Activated CD8-positive, alpha-beta T cell treated with anti-CD3 and anti-CD28 coated beads, Interleukin-2, amount 10 ng/mL, durations not matched to agents 7 days and 5 days (primary cell): ENCODE measurements at regions of chr14 and their contacts with region 1.

Region 1: DNA sequence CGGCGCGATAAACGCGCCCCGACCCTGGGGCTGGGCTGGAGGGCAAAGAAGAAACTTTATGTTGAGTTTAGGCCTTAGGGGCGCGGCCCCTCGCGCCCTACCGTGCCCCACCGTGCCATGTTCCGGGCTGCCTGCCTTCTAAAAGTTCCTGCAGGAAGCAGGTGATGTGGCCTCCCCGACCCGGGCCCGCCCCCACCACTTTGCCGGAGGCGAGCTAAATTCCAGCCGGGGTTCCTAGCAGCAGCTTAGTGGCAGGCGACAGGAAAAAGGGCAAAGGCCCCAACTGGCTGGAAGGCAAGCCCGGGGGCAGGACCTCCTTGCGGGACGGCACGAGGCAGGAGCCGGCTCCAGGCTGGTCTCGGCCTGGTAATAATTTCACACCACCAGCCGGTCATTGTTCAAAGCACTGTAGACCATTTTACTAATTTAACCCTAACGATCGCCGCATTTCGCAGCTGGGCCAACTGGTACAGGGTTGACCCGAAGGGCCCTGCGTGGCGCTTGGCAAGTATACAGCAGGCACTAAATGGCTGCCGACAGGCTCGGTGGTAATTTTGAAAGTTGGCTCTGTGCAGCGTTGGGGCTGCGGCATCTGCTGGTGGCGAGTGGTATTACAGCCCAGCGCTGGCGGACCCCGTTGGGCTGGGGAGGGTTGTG is 895 bp upstream of the CCDC88C start:
- DNase-seq: peak; percentile 86
- ATAC-seq: peak; percentile 17
- H3K4me3 Mint-ChIP-seq: peak overlapping the region; percentile 73
- H3K27ac Mint-ChIP-seq: peak overlapping the region; percentile 89
- H3K4me1 Mint-ChIP-seq: peaks cover 30% of the 10 kb centered on the region
- H3K27me3 Mint-ChIP-seq: peaks cover 6% of the 10 kb centered on the region

Region 2: GRCh38 chr14:91228112-91229004 is 190.2 kb before region 1 on chr14:
- CTCF ChIA-PET with region 1: no interaction called
- POLR2A ChIA-PET with region 1: interaction called, 12 read pairs
- DNase-seq: peak; percentile 87
- ATAC-seq: peak; percentile 76
- H3K4me3 Mint-ChIP-seq: peak overlapping the region; percentile 75
- H3K27ac Mint-ChIP-seq: peak overlapping the region; percentile 97
- H3K4me1 Mint-ChIP-seq: peaks cover 96% of the 10 kb centered on the region
- H3K27me3 Mint-ChIP-seq: no peaks in the 10 kb centered on the region

Region 3: GRCh38 chr14:91317381-91318308 is 100.9 kb before region 1 on chr14:
- CTCF ChIA-PET with region 1: interaction called, 233 read pairs
- POLR2A ChIA-PET with region 1: interaction called, 61 read pairs
- DNase-seq: peak; percentile 88
- ATAC-seq: peak; percentile 60
- H3K4me3 Mint-ChIP-seq: peak overlapping the region; percentile 52
- H3K27ac Mint-ChIP-seq: peak overlapping the region; percentile 95
- H3K4me1 Mint-ChIP-seq: peaks cover 78% of the 10 kb centered on the region
- H3K27me3 Mint-ChIP-seq: no peaks in the 10 kb centered on the region

Region 4: GRCh38 chr14:91350813-91351511 is 67.6 kb before region 1 on chr14:
- CTCF ChIA-PET with region 1: interaction called, 96 read pairs
- POLR2A ChIA-PET with region 1: interaction called, 40 read pairs
- DNase-seq: peak; percentile 85
- ATAC-seq: peak; percentile 85
- H3K4me3 Mint-ChIP-seq: peak overlapping the region; percentile 78
- H3K27ac Mint-ChIP-seq: peak overlapping the region; percentile 94
- H3K4me1 Mint-ChIP-seq: peaks cover 94% of the 10 kb centered on the region
- H3K27me3 Mint-ChIP-seq: no peaks in the 10 kb centered on the region

Region 5: DNA sequence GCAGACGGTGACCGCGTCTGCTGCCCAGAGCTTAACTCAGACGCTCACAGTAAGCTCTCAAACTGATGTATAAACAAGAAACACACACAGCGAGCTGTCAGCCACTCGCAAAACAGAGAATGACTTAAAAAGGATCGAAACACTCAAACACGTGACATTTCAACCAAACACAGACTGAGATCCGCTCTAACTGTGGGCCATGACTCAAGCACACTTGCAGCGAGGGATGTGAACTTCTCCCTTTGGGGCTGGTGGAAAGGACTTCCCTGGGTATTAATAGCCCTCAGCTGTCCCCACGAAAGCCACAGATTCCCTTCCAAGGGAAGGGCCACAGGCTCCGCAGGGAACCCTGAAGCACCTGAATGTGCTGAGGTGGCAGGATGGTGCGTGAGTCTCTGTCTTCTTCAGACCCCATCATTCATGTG is 30.0 kb before region 1 on chr14:
- CTCF ChIA-PET with region 1: interaction called, 10 read pairs
- POLR2A ChIA-PET with region 1: interaction called, 5 read pairs
- DNase-seq: peak; percentile 70
- ATAC-seq: peak; percentile 82
- H3K4me3 Mint-ChIP-seq: peak overlapping the region; percentile 35
- H3K27ac Mint-ChIP-seq: peak overlapping the region; percentile 78
- H3K4me1 Mint-ChIP-seq: peaks cover 84% of the 10 kb centered on the region
- H3K27me3 Mint-ChIP-seq: no peaks in the 10 kb centered on the region

Region 6: DNA sequence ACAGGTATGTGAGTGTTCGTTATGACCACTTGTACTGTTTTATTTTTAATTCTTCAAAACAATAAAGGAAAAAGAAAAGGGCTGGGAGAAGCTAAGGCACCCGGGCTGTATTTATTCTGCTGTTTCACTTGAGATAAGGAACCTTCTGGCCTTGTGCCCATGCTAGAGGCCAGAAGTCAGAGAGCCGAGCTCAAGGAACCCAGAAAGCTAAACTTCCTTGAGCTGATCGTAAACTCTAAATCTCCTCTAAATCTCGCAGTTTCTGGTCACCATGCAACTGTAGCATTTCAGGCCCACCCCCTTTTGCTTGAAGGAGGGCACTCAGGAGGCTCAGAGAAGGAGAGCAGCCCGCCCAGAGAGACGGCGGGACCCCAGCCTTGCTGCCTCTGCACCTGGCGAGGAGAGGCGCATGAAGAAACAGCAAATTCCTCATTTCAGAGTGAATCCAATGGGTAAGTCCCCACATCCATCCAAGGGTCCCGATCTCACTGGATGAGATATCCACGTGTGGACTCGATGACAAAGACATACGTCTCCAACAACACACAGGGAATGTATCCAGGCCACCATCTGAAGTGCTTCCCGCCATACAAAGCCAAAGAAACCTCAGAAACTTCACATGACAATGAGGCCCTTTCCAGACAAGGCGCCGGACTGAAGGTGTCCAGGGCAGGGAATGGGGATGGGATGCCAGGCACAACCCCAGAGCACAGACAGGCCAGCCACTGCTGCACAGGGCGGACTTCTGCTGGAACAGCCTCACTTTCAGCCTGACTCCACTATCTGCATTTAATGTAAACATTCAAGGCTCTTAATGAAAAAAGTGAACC is 15.5 kb before region 1 on chr14:
- CTCF ChIA-PET with region 1: interaction called, 151 read pairs
- POLR2A ChIA-PET with region 1: interaction called, 65 read pairs
- DNase-seq: peak; percentile 49
- ATAC-seq: peak; percentile 10
- H3K4me3 Mint-ChIP-seq: peak overlapping the region; percentile 52
- H3K27ac Mint-ChIP-seq: peak overlapping the region; percentile 83
- H3K4me1 Mint-ChIP-seq: peaks cover 93% of the 10 kb centered on the region
- H3K27me3 Mint-ChIP-seq: no peaks in the 10 kb centered on the region